Adrenal gland (tissue), 19 donors: ENCODE measurements at regions of chr21 and their contacts with region 1.

Region 1: DNA sequence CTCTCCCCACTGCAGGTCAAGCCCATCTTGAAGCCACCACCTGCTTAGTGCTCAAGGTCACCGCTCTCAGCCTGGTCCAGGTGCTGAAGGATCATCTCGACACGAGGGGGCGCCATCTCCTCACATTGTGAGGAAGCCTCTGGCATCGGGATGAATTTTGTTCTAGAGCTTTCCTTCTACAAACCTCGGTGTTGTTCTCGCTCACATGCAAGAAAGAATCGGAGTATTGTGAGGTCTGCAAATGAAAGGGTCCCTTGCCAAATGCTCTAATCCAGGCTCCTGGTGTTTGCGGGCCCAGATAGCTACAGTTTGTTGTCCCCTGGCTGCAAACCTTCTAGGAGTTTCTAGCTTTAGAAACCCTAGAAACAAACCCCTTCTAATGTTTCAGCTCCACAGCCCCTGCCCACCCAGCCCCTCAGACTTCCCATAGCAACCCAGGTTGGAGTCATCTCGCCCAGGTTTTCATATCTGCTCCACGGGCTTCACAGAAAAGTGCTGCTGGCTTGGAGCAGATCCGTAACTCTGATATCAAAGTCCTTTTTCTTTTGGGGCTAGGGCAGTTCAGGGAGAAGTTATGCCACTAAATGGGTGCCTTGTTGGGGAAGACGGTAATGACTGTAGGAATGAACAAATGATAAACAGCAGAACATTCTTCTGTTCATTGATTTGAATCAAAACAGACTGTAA is 8.6 kb upstream of the ATP5PO start:
- DNase-seq: peak; percentile 80 to 96 (median 90)
- H3K4me3 ChIP-seq: no peak overlapping the region
- H3K27ac ChIP-seq: no peak overlapping the region
- H3K4me1 ChIP-seq: peaks cover 0 to 6% of the 10 kb centered on the region in 2 donors
- H3K27me3 ChIP-seq: no peaks in the 10 kb centered on the region
- CTCF ChIP-seq: peak; percentile 92 to 97 (median 94)
- POLR2A ChIP-seq: no peak

Region 2: GRCh38 chr21:34202553-34203372 is 278.5 kb after region 1 on chr21:
- intact Hi-C with region 1: loop called in 1 of 2 experiments (anchors 10 kb)
- DNase-seq: peak; percentile 50 to 72 (median 58)
- H3K4me3 ChIP-seq: peak overlapping the region in 1 of 4 donors; percentile 54
- H3K27ac ChIP-seq: peak overlapping the region in 4 of 5 donors; percentile 63 to 86 (median 74)
- H3K4me1 ChIP-seq: peaks cover 11 to 54% of the 10 kb centered on the region in 2 donors
- H3K27me3 ChIP-seq: no peaks in the 10 kb centered on the region
- CTCF ChIP-seq: no peak
- POLR2A ChIP-seq: no peak

Region 3: GRCh38 chr21:34345091-34345871 is 421.1 kb after region 1 on chr21:
- intact Hi-C with region 1: loop called (anchors 2 to 5 kb)
- DNase-seq: peak in 2 of 7 donors; percentile 19 to 33
- H3K4me3 ChIP-seq: no peak overlapping the region
- H3K27ac ChIP-seq: peak overlapping the region in 2 of 5 donors; percentile 45 to 57
- H3K4me1 ChIP-seq: no peaks in the 10 kb centered on the region
- H3K27me3 ChIP-seq: no peaks in the 10 kb centered on the region
- CTCF ChIP-seq: no peak
- POLR2A ChIP-seq: no peak